Astrocyte of the cerebellum (primary cell): ENCODE measurements at regions of chr6 and their contacts with region 1.

Region 1: DNA sequence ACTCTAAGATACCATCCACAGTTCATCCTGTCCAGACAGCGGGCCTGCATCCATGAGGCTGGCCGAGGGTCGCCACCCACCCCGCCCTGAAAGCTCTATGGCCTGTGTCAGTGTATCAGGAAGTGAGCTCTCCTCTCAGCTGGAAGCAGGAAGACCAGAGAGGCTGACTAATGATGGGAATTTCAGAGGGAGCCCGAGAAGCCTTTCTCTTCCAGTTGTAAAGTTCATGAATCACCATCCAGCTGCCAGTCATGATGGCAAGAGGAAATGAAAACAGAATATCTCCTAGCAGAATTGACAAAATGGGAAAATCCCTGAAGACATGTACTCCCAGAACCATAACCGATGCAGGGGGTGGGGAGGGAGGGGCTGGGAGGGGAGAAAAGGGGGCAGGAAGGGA is 109.6 kb upstream of the RPS6KA2 start:
- DNase-seq: no peak
- H3K4me3 ChIP-seq: no peak overlapping the region
- CTCF ChIP-seq: no peak

Region 2: GRCh38 chr6:166633732-166634535 is 102.7 kb before region 1 on chr6:
- in situ Hi-C with region 1: loop called (anchors 5 kb)
- DNase-seq: no peak
- H3K4me3 ChIP-seq: no peak overlapping the region
- CTCF ChIP-seq: no peak

Region 3: DNA sequence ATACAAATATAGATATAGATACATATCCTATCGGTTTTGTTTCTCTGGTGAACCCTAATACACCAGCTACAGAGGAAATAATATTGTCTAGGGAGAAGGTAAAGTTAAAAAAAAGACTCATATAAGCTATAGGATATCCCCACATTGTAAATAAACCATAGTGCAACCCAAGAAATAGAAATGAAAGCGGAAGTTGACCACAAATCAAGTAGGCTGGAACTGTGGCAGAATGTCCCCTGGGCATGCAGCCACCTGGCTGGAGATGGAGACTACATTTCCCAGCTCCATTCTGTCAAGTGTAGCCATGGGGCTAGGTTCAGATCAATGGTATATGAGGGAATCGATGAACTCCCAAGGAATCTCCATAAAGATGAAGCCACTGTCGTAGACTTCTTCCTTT is 39.5 kb before region 1 on chr6:
- in situ Hi-C with region 1: no loop called
- DNase-seq: no peak
- H3K4me3 ChIP-seq: no peak overlapping the region
- CTCF ChIP-seq: no peak